CD8-positive, alpha-beta T cell (primary cell): ENCODE measurements at regions of chr10 and their contacts with region 1.

Region 1: GRCh38 chr10:55786461-55787050 is 574.5 kb downstream of the ZWINT start:
- DNase-seq: no peak
- ATAC-seq: no peak
- H3K4me3 ChIP-seq: no peak overlapping the region
- H3K4me3 Mint-ChIP-seq: no peak overlapping the region
- H3K27ac ChIP-seq: no peak overlapping the region
- H3K27ac Mint-ChIP-seq: no peak overlapping the region
- H3K4me1 ChIP-seq: no peaks in the 10 kb centered on the region
- H3K4me1 Mint-ChIP-seq: no peaks in the 10 kb centered on the region
- H3K27me3 ChIP-seq: no peaks in the 10 kb centered on the region
- H3K27me3 Mint-ChIP-seq: no peaks in the 10 kb centered on the region
- CTCF ChIP-seq: no peak

Region 2: GRCh38 chr10:55631071-55631654 is 155.4 kb before region 1 on chr10:
- CTCF ChIA-PET with region 1: no interaction called
- POLR2A ChIA-PET with region 1: no interaction called
- intact Hi-C with region 1: no loop called
- DNase-seq: no peak
- ATAC-seq: no peak
- H3K4me3 ChIP-seq: no peak overlapping the region
- H3K4me3 Mint-ChIP-seq: no peak overlapping the region
- H3K27ac ChIP-seq: no peak overlapping the region
- H3K27ac Mint-ChIP-seq: no peak overlapping the region
- H3K4me1 ChIP-seq: no peaks in the 10 kb centered on the region
- H3K4me1 Mint-ChIP-seq: peaks cover 1% of the 10 kb centered on the region
- H3K27me3 ChIP-seq: peaks cover 0 to 4% of the 10 kb centered on the region in 2 experiments
- H3K27me3 Mint-ChIP-seq: peaks cover 22% of the 10 kb centered on the region
- CTCF ChIP-seq: no peak

Region 3: GRCh38 chr10:55766212-55766611 is 20.3 kb before region 1 on chr10:
- CTCF ChIA-PET with region 1: no interaction called
- POLR2A ChIA-PET with region 1: no interaction called
- intact Hi-C with region 1: no loop called
- DNase-seq: no peak
- ATAC-seq: no peak
- H3K4me3 ChIP-seq: no peak overlapping the region
- H3K4me3 Mint-ChIP-seq: no peak overlapping the region
- H3K27ac ChIP-seq: no peak overlapping the region
- H3K27ac Mint-ChIP-seq: no peak overlapping the region
- H3K4me1 ChIP-seq: no peaks in the 10 kb centered on the region
- H3K4me1 Mint-ChIP-seq: no peaks in the 10 kb centered on the region
- H3K27me3 ChIP-seq: no peaks in the 10 kb centered on the region
- H3K27me3 Mint-ChIP-seq: no peaks in the 10 kb centered on the region
- CTCF ChIP-seq: no peak

Region 4: GRCh38 chr10:55837271-55837670 is 50.7 kb after region 1 on chr10:
- CTCF ChIA-PET with region 1: no interaction called
- POLR2A ChIA-PET with region 1: no interaction called
- intact Hi-C with region 1: loop called in 1 of 2 experiments (anchors 5 kb)
- DNase-seq: no peak
- ATAC-seq: no peak
- H3K4me3 ChIP-seq: no peak overlapping the region
- H3K4me3 Mint-ChIP-seq: no peak overlapping the region
- H3K27ac ChIP-seq: no peak overlapping the region
- H3K27ac Mint-ChIP-seq: no peak overlapping the region
- H3K4me1 ChIP-seq: no peaks in the 10 kb centered on the region
- H3K4me1 Mint-ChIP-seq: no peaks in the 10 kb centered on the region
- H3K27me3 ChIP-seq: no peaks in the 10 kb centered on the region
- H3K27me3 Mint-ChIP-seq: no peaks in the 10 kb centered on the region
- CTCF ChIP-seq: no peak

Region 5: GRCh38 chr10:55867848-55868247 is 81.3 kb after region 1 on chr10:
- CTCF ChIA-PET with region 1: no interaction called
- POLR2A ChIA-PET with region 1: no interaction called
- intact Hi-C with region 1: no loop called
- DNase-seq: no peak
- ATAC-seq: no peak
- H3K4me3 ChIP-seq: no peak overlapping the region
- H3K4me3 Mint-ChIP-seq: no peak overlapping the region
- H3K27ac ChIP-seq: no peak overlapping the region
- H3K27ac Mint-ChIP-seq: no peak overlapping the region
- H3K4me1 ChIP-seq: no peaks in the 10 kb centered on the region
- H3K4me1 Mint-ChIP-seq: no peaks in the 10 kb centered on the region
- H3K27me3 ChIP-seq: no peaks in the 10 kb centered on the region
- H3K27me3 Mint-ChIP-seq: no peaks in the 10 kb centered on the region
- CTCF ChIP-seq: no peak

Region 6: DNA sequence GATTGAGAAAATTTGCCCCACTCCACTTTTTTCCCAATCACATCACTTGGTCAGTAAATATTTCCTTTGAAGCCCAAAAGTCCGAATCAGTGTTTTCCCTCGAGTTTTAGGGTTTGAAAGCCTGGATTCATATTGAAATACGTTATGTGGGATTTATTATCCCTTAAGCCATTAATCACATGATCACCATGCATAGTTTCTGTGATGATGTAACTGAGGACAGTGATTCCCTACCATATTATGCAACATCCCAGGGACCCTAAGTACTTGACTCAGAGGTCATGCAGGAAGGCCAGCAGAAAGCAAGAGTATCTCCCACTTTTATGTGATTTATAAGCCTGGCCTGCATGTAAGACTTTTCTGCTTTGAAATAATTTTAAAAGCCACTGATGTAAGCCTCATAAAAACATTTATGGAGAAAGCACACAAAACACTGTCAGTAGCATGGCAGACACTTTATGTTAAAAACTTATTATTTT is 1205.1 kb after region 1 on chr10:
- CTCF ChIA-PET with region 1: no interaction called
- POLR2A ChIA-PET with region 1: no interaction called
- intact Hi-C with region 1: no loop called
- DNase-seq: no peak
- ATAC-seq: no peak
- H3K4me3 ChIP-seq: no peak overlapping the region
- H3K4me3 Mint-ChIP-seq: no peak overlapping the region
- H3K27ac ChIP-seq: no peak overlapping the region
- H3K27ac Mint-ChIP-seq: no peak overlapping the region
- H3K4me1 ChIP-seq: no peaks in the 10 kb centered on the region
- H3K4me1 Mint-ChIP-seq: no peaks in the 10 kb centered on the region
- H3K27me3 ChIP-seq: no peaks in the 10 kb centered on the region
- H3K27me3 Mint-ChIP-seq: no peaks in the 10 kb centered on the region
- CTCF ChIP-seq: no peak